ENCODE measurements at regions of chrX and their contacts with region 1.

Region 1: DNA sequence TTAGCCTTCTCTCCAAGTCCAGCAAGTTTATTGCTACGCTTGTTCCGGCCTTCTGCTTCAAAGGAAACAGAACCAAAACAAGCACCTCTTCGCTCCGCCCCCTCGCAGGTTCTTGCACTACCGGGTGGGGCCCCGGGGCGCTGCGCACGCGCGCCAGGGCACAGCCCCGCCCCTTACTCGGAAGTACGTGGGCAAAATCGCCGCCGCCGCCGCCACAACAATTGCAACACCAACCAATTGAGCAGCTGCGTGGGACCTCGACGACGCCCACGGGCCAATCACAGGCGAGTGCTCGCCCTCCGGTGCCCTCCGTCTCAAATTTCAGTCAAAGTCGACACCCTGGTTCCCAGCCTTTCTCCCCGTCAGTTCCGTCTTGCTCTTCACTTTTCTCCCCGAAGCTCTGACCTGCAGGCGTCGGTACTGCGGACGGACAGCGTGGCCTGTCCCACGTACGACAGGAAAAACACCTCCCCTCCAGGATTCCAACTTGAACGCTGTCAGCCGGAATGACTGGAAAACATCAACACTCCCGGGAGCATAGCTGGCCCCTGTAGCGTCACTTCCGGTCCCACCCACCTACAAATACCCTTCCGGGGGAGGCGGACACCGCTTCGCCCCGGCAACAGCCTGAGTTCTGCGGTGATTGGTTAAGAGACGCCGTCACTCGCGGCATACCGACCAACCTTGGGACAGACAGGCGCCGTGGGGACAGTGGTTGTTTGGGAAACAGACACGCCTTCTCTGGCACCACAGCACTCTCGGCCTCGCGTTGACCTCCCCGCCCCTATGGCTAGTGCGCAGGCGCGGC is 624 bp upstream of the OTUD5 start:
- DNase-seq: peak; percentile 90 to 98 (median 92)
- ATAC-seq: peak; percentile 87
- H3K4me3 ChIP-seq: peak overlapping the region; percentile 84
- H3K27ac ChIP-seq: peak overlapping the region; percentile 98
- H3K4me1 ChIP-seq: peaks cover 34 to 57% of the 10 kb centered on the region in 2 experiments
- H3K27me3 ChIP-seq: no peaks in the 10 kb centered on the region; a peak in 1 of 5 replicates
- CTCF ChIP-seq: no peak
- EP300 ChIP-seq: no peak
- POLR2A ChIP-seq: peak; percentile 83
- RAD21 ChIP-seq: no peak

Region 2: GRCh38 chrX:48937054-48937907 is 20.8 kb before region 1 on chrX:
- CTCF ChIA-PET with region 1: no interaction called
- POLR2A ChIA-PET with region 1: interaction called, 11 read pairs
- in situ Hi-C with region 1: no loop called
- intact Hi-C with region 1: no loop called
- DNase-seq: peak; percentile 62 to 93 (median 72)
- ATAC-seq: peak; percentile 82
- H3K4me3 ChIP-seq: no peak overlapping the region; the same call in 1 of the 2 replicates
- H3K27ac ChIP-seq: peak overlapping the region; percentile 91
- H3K4me1 ChIP-seq: peaks cover 51 to 61% of the 10 kb centered on the region in 2 experiments
- H3K27me3 ChIP-seq: no peaks in the 10 kb centered on the region
- CTCF ChIP-seq: peak; percentile 55 to 74 (median 63)
- EP300 ChIP-seq: peak; percentile 80
- POLR2A ChIP-seq: no peak
- RAD21 ChIP-seq: peak; percentile 21 to 56; a peak in 3 of 4 replicates

Region 3: GRCh38 chrX:48945516-48946348 is 12.3 kb before region 1 on chrX:
- CTCF ChIA-PET with region 1: no interaction called
- POLR2A ChIA-PET with region 1: interaction called, 14 read pairs
- in situ Hi-C with region 1: no loop called
- intact Hi-C with region 1: no loop called
- DNase-seq: peak; percentile 33 to 72 (median 48)
- ATAC-seq: peak; percentile 69
- H3K4me3 ChIP-seq: no peak overlapping the region
- H3K27ac ChIP-seq: peak overlapping the region; percentile 4; the same call in 1 of the 3 replicates
- H3K4me1 ChIP-seq: peaks cover 35 to 55% of the 10 kb centered on the region in 2 experiments
- H3K27me3 ChIP-seq: no peaks in the 10 kb centered on the region
- CTCF ChIP-seq: peak; percentile 84 to 86 (median 86)
- EP300 ChIP-seq: no peak
- POLR2A ChIP-seq: no peak
- RAD21 ChIP-seq: peak; percentile 72 to 76

Region 4: GRCh38 chrX:49002091-49002935 is 44.3 kb after region 1 on chrX and contains the start of gene GRIPAP1:
- CTCF ChIA-PET with region 1: no interaction called
- POLR2A ChIA-PET with region 1: no interaction called
- in situ Hi-C with region 1: no loop called
- intact Hi-C with region 1: loop called (anchors 5 kb)
- DNase-seq: peak; percentile 90 to 92 (median 91)
- ATAC-seq: peak; percentile 90
- H3K4me3 ChIP-seq: peak within 1 kb of the TSS; percentile 80
- H3K27ac ChIP-seq: peak within 1 kb of the TSS; percentile 100
- H3K4me1 ChIP-seq: peaks cover 3 to 6% of the 10 kb centered on the region in 2 experiments; a peak in 2 of 5 replicates
- H3K27me3 ChIP-seq: no peaks in the 10 kb centered on the region
- CTCF ChIP-seq: no peak
- EP300 ChIP-seq: no peak
- POLR2A ChIP-seq: peak; percentile 87
- RAD21 ChIP-seq: no peak
- polyA plus RNA-seq, gene GRIPAP1: 4.1 to 4.6 TPM

Region 5: DNA sequence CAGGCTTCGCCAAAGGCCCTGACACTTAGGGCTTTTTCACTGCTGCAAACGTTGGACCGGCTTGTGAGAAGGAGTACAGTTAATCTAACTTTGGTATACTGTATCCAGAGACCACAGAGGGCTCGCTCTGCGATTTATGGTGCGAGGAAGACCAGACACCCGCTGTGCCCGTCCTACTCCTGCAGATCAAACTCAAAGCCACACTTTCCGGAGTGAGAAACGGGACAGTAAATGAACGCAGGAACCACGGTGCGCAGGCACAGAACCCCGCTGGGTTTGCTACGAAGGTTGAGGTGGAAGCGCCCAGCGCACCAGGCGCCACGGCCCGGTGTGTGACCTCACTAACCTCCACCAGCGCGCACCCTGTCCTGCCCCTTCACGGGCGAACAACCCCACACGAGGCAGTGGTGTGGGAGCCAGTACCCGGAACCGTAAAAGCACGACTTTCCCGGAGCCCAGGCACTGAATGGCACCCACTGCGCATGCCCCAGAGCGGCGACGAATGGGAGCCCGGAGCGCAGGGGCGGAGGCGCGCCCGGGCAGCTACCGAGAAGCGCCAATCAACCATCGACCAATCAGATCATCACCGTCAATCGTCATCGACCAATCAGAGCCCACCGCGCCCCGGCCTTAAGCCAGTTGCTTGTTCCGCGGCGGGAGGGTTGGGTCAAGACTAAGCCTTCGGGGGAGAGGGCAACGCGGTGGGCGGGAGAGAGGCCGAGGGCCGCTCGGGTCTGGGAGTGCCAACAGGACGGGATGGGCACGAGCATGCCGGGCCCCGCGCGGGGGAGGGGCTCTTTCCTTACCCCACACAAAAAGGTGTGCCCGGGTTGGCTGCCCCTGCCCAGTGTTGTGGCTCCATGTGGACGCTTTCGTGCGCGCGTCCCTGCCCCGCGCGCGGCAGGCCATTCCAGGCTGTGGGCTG is 142.9 kb after region 1 on chrX:
- CTCF ChIA-PET with region 1: no interaction called
- POLR2A ChIA-PET with region 1: no interaction called
- in situ Hi-C with region 1: no loop called
- intact Hi-C with region 1: loop called (anchors 2 kb)
- DNase-seq: peak; percentile 97 to 99 (median 98)
- ATAC-seq: peak; percentile 94
- H3K4me3 ChIP-seq: peak overlapping the region; percentile 58
- H3K27ac ChIP-seq: peak overlapping the region; percentile 97
- H3K4me1 ChIP-seq: peaks cover 6 to 14% of the 10 kb centered on the region in 2 experiments; a peak in 4 of 5 replicates
- H3K27me3 ChIP-seq: no peaks in the 10 kb centered on the region
- CTCF ChIP-seq: no peak
- EP300 ChIP-seq: no peak
- POLR2A ChIP-seq: peak; percentile 89
- RAD21 ChIP-seq: no peak

Region 6: DNA sequence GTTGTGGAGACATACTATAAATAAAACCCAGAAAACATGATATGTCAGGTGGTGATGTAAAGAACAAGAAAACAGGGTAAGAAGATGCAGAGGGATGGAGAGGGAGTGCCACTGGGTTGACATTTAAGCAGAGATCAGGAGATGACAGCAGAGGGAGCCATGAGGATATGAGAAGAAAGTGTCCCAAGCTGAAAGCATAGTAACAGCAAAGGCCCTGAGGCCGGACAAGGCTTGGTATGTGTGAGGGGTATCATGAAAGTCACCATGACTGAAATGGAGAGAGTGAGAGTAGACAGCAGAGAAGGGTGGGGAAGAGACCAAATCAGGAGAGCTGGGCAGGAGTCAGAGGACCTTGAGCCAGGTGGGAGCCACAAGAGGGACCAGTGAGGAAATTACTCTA is 162.1 kb after region 1 on chrX:
- CTCF ChIA-PET with region 1: no interaction called
- POLR2A ChIA-PET with region 1: no interaction called
- in situ Hi-C with region 1: no loop called
- intact Hi-C with region 1: no loop called
- DNase-seq: peak in 1 of 4 experiments; percentile 27
- ATAC-seq: no peak
- H3K4me3 ChIP-seq: no peak overlapping the region
- H3K27ac ChIP-seq: no peak overlapping the region
- H3K4me1 ChIP-seq: peaks cover 0 to 17% of the 10 kb centered on the region in 2 experiments; a peak in 4 of 5 replicates
- H3K27me3 ChIP-seq: no peaks in the 10 kb centered on the region
- CTCF ChIP-seq: peak; percentile 8 to 37 (median 17); a peak in 2 of 6 replicates
- EP300 ChIP-seq: no peak
- POLR2A ChIP-seq: no peak
- RAD21 ChIP-seq: peak; percentile 30 to 48

Region 7: GRCh38 chrX:49172280-49172780 is 214.3 kb after region 1 on chrX:
- CTCF ChIA-PET with region 1: no interaction called
- POLR2A ChIA-PET with region 1: no interaction called
- in situ Hi-C with region 1: no loop called
- intact Hi-C with region 1: loop called (anchors 10 kb)
- DNase-seq: peak; percentile 51 to 77 (median 54)
- ATAC-seq: peak; percentile 43
- H3K4me3 ChIP-seq: peak overlapping the region; percentile 57
- H3K27ac ChIP-seq: peak overlapping the region; percentile 76
- H3K4me1 ChIP-seq: peaks cover 45 to 56% of the 10 kb centered on the region in 2 experiments
- H3K27me3 ChIP-seq: no peaks in the 10 kb centered on the region
- CTCF ChIP-seq: no peak
- EP300 ChIP-seq: no peak
- POLR2A ChIP-seq: no peak
- RAD21 ChIP-seq: no peak